Gastrocnemius medialis (tissue), 4 donors: ENCODE measurements at regions of chr16 and their contacts with region 1.

Region 1: DNA sequence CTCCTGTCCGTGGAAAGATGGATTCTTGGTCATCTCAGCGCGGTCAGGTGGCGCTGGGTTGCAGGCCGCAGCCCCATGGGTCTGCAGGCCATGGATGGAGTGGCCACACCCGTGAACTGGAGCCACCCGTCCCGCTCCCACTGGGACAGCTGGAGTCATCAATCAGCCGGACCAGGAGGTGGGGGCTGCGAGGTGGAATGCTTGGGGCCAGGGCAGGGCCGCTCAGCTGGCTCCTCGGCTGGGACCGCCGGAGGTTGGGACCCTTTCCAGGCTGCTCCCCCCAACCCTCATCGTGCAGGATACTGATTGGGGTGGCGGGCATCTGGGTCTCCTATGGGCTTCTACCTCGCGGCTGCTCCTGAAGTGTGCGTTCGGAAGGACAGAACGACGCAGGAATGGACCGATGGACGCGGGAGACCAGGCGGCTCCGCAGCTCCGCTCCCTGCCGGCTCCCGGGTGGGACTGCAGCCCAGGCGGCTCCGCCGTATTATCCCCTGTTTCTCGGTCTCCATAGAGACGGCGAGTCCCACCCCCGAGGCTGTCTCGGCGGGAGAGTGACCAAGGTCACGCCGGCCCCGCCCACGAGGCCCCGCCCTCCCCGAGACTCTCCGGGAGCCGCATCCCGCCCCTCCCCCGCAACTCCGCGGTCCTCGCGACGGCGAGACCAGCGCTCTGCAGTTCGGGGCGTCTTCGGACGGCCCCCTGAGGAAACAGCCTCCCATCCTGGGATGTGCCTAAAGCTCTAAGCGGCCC is at the start of gene TPPP3:
- DNase-seq: peak; percentile 55 to 79
- ATAC-seq: peak; percentile 51 to 53
- H3K4me3 ChIP-seq: peak within 1 kb of the TSS; percentile 52 to 60 (median 57)
- H3K27ac ChIP-seq: peak within 1 kb of the TSS; percentile 66 to 85 (median 75)
- H3K4me1 ChIP-seq: peaks cover 54 to 68% of the 10 kb centered on the region in 2 donors
- H3K27me3 ChIP-seq: no peaks in the 10 kb centered on the region
- CTCF ChIP-seq: peak; percentile 56 to 72 (median 67)
- POLR2A ChIP-seq: peak; percentile 24 to 33
- total RNA-seq, gene TPPP3: 2.2 to 31.9 (median 7.1) TPM

Region 2: DNA sequence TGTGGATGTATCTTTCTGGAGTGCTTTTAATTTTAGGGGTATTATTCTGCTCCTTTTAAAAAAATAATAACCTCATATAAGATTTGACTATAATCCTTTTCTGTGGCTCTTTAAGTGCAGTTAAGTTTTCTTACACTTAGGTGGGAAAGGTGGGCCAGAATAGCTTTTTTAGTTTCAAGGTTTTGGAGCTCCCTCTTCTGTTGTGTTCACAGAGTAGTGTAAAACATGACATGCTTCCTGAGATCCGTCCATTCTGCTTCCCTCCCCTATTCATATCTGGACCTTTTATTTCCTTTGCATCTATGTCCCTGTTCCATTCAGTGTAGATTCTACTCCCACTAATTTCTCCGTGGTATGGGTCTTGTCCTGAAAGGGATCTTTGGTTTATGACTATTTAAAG is 53.8 kb before region 1 on chr16:
- in situ Hi-C with region 1: no loop called
- intact Hi-C with region 1: no loop called
- DNase-seq: no peak
- ATAC-seq: no peak
- H3K4me3 ChIP-seq: no peak overlapping the region
- H3K27ac ChIP-seq: no peak overlapping the region
- H3K4me1 ChIP-seq: no peaks in the 10 kb centered on the region
- H3K27me3 ChIP-seq: no peaks in the 10 kb centered on the region
- CTCF ChIP-seq: no peak
- POLR2A ChIP-seq: no peak

Region 3: GRCh38 chr16:67372664-67373063 is 20.5 kb before region 1 on chr16:
- in situ Hi-C with region 1: no loop called
- intact Hi-C with region 1: loop called (anchors 2 kb)
- DNase-seq: no peak
- ATAC-seq: no peak
- H3K4me3 ChIP-seq: no peak overlapping the region
- H3K27ac ChIP-seq: no peak overlapping the region
- H3K4me1 ChIP-seq: peaks cover 0 to 3% of the 10 kb centered on the region in 2 donors
- H3K27me3 ChIP-seq: no peaks in the 10 kb centered on the region
- CTCF ChIP-seq: peak in 4 of 5 experiments; percentile 22 to 53 (median 34)
- POLR2A ChIP-seq: no peak

Region 4: DNA sequence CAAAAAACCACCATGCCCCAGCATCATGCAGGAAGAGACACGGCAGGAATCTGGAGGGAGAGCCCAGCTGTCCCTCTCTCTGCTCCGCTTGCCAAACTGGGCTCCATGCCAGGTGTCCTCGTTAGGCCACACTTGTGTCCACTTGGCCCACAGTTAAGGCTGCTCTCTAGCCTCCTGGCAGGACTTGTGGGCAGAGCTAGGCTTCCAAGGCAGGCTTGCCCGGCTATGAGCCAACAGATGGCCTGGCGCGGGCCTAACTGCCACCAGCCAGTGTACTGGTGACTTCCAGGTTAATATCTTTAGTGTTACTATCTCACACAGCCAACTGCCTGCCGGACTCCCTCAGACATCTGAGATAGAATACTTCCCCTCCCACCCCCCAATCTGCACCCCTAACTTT is 77.1 kb after region 1 on chr16:
- in situ Hi-C with region 1: no loop called
- intact Hi-C with region 1: no loop called
- DNase-seq: peak; percentile 96 to 99
- ATAC-seq: peak; percentile 98
- H3K4me3 ChIP-seq: no peak overlapping the region
- H3K27ac ChIP-seq: peak overlapping the region; percentile 51 to 74 (median 68)
- H3K4me1 ChIP-seq: peaks cover 52 to 76% of the 10 kb centered on the region in 2 donors
- H3K27me3 ChIP-seq: no peaks in the 10 kb centered on the region
- CTCF ChIP-seq: no peak
- POLR2A ChIP-seq: no peak

Region 5: DNA sequence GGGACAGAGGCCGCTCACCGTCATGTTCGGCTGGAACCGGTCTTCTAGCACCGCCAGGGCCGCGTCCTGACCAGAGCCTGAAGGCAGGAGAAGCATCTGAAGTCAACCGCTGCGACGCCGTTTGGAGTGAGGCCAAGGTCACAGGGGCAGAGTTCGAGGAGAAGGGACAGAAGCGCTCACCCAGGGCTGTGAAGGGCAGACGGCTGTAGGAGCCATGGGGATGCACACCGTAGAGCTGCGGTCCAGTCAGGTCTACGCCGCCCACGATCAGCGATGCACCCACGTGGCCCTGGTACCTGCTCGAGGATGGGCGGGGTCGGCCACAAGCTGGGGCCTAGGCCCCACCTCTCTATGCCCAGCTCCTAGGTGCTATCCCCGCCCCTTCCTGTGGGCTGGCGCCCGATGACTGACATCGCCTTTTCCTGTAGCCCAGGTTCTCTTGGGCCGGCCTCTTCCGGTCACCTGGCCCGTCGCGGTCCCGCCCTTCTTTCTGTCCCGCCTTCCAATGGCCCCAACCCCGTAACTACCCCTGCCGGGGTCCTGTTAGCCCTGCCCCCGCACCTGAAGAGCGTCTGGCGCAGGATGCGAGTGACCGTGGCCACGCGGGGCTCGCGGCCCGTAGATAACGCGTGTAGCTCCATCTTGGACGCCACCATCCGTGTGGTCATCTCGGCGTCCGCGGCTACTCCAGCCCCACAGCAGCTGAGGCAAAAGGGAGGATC is 542.4 kb after region 1 on chr16:
- in situ Hi-C with region 1: no loop called
- intact Hi-C with region 1: no loop called
- DNase-seq: peak; percentile 94 to 96
- ATAC-seq: peak; percentile 89 to 92
- H3K4me3 ChIP-seq: peak overlapping the region; percentile 79 to 99 (median 93)
- H3K27ac ChIP-seq: peak overlapping the region; percentile 91 to 98 (median 94)
- H3K4me1 ChIP-seq: peaks cover 22 to 29% of the 10 kb centered on the region in 2 donors
- H3K27me3 ChIP-seq: no peaks in the 10 kb centered on the region
- CTCF ChIP-seq: peak in 1 of 5 experiments; percentile 28
- POLR2A ChIP-seq: peak; percentile 61 to 65